Activated naive CD4-positive, alpha-beta T cell treated with anti-CD3 and anti-CD28 coated beads for 36 hours (primary cell): ENCODE measurements at regions of chr16 and their contacts with region 1.

Region 1: GRCh38 chr16:4517812-4518680 is 20.5 kb downstream of the CDIP1 start:
- DNase-seq: no peak
- H3K4me3 Mint-ChIP-seq: no peak overlapping the region
- H3K27ac Mint-ChIP-seq: no peak overlapping the region
- H3K4me1 Mint-ChIP-seq: peaks cover 30% of the 10 kb centered on the region
- H3K27me3 Mint-ChIP-seq: no peaks in the 10 kb centered on the region

Region 2: GRCh38 chr16:4200000-4200780 is 317.9 kb before region 1 on chr16:
- CTCF ChIA-PET with region 1: no interaction called
- intact Hi-C with region 1: no loop called
- DNase-seq: peak; percentile 62
- H3K4me3 Mint-ChIP-seq: no peak overlapping the region
- H3K27ac Mint-ChIP-seq: no peak overlapping the region
- H3K4me1 Mint-ChIP-seq: peaks cover 2% of the 10 kb centered on the region
- H3K27me3 Mint-ChIP-seq: peaks cover 2% of the 10 kb centered on the region

Region 3: GRCh38 chr16:4529085-4530060 is 11.3 kb after region 1 on chr16:
- CTCF ChIA-PET with region 1: interaction called, 6 read pairs
- intact Hi-C with region 1: loop called (anchors 2 kb)
- DNase-seq: peak; percentile 61
- H3K4me3 Mint-ChIP-seq: peak overlapping the region; percentile 37
- H3K27ac Mint-ChIP-seq: peak overlapping the region; percentile 81
- H3K4me1 Mint-ChIP-seq: peaks cover 43% of the 10 kb centered on the region
- H3K27me3 Mint-ChIP-seq: no peaks in the 10 kb centered on the region